Posterior vena cava (tissue), 2 donors: ENCODE measurements at regions of chr15 and their contacts with region 1.

Region 1: GRCh38 chr15:87764461-87765240 is 491.9 kb downstream of the NTRK3 start:
- DNase-seq: no peak

Region 2: DNA sequence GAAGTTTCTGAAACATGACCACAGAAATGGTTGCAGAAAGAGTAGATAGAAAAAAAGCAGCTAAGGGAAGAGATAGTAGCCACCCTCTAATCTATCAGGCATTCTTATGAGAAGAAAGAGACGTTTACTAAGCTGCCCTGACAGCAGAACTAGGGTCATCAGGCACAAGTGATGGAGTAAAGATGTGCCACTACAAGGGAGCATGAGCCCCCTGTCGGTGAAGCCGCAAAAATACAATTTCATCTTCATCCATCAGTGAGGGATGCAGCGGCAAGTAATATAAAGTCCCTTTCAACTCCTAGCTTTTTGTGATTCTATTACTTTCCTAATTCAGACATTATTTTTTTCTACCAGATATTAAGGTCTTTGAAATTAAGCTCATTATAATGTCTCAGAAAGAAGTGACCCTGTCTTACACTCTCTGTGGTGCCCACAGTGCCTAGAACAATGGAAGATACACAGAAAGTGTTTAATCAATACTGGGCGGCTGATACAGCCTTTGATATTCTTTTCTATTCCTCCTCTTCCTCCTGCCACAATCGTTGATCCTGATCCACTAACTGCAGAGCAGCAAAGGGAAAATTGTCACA is 159.7 kb before region 1 on chr15:
- intact Hi-C with region 1: loop called in 1 of 2 experiments (anchors 5 kb)
- DNase-seq: no peak

Region 3: DNA sequence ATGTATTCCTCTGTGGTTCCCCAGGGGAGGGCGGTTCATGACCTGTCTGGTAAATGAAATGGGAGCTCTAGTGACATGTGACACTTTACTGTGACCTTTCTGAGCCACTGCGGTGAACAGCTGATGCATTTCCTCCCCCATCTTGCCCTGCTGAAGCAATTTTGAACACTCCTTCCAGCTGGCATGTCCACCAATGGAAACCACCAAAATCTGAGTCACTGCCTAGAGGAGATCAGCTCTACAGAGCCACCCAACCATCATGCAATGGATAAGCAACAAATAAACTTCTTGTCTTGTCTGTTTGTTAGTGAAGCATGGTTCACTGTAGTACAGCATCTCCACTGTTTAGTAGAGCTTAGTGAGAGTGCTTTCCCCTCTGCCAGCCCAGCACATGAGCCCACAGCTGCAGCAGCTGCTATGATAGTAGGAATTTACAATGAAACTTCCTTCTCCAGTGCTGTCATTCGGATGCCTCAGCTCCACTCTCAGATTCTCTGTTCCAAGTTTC is 12.5 kb after region 1 on chr15:
- intact Hi-C with region 1: loop called in 1 of 2 experiments (anchors 1 kb)
- DNase-seq: peak; percentile 84

Region 4: GRCh38 chr15:88012233-88012632 is 247.6 kb after region 1 on chr15:
- intact Hi-C with region 1: no loop called
- DNase-seq: no peak